ENCODE measurements at regions of chr11 and their contacts with region 1.

Region 1: GRCh38 chr11:75328426-75329277 is 22.8 kb downstream of the ARRB1 start:
- DNase-seq: peak; percentile 77
- ATAC-seq: peak; percentile 76
- H3K4me3 Mint-ChIP-seq: no peak overlapping the region
- H3K27ac Mint-ChIP-seq: peak overlapping the region; percentile 52
- H3K4me1 Mint-ChIP-seq: peaks cover 67% of the 10 kb centered on the region
- H3K27me3 Mint-ChIP-seq: no peaks in the 10 kb centered on the region

Region 2: GRCh38 chr11:75340050-75340409 is 11.4 kb after region 1 on chr11:
- CTCF ChIA-PET with region 1: interaction called, 22 read pairs
- POLR2A ChIA-PET with region 1: no interaction called
- intact Hi-C with region 1: no loop called
- DNase-seq: no peak
- ATAC-seq: peak; percentile 6
- H3K4me3 Mint-ChIP-seq: no peak overlapping the region
- H3K27ac Mint-ChIP-seq: peak overlapping the region; percentile 83
- H3K4me1 Mint-ChIP-seq: peaks cover 95% of the 10 kb centered on the region
- H3K27me3 Mint-ChIP-seq: no peaks in the 10 kb centered on the region

Region 3: DNA sequence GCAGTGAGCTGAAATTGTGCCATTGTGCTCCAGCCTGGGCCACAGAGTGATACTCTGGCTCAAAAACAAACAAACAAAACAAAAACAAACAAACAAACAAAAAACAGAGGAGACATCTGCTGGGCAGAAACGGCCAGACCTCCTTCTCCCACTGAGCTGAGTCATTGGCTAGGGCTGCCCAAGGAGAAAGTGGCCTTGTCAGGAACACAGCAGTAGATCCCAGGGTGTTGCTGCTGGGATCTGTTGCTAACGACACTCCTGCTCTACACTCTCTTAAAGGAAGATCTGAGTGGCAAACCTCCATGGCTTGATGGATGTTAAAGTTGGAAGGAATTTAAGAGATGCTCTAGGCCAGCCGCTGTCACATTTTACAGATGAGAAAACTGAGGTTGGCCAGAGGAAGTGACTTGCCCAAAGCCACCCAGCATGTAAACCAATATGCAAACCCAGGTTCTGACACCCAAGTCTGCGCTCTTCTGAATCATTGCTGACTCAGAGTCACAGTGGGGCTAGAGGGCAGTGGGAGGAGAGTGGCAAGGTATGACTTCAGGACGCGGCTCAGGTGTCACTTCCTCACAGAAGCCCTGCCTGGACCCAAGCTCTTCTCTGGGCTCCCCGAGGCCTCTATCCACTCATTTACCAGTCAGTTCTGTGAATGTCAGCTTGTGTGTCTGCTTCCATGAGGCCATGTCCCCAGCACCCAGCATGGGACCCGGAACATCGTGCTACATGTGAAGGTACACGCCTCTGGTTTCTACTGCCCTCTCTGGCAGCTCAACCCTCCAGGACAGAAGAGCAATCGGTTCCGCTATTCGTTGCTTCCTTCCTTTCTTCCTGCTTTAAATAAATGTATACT is 208.4 kb after region 1 on chr11:
- CTCF ChIA-PET with region 1: no interaction called
- POLR2A ChIA-PET with region 1: no interaction called
- intact Hi-C with region 1: no loop called
- DNase-seq: peak; percentile 80
- ATAC-seq: peak; percentile 93
- H3K4me3 Mint-ChIP-seq: no peak overlapping the region
- H3K27ac Mint-ChIP-seq: peak overlapping the region; percentile 44
- H3K4me1 Mint-ChIP-seq: peaks cover 38% of the 10 kb centered on the region
- H3K27me3 Mint-ChIP-seq: no peaks in the 10 kb centered on the region

Measured in activated CD4-positive, alpha-beta T cell treated with anti-CD3 and anti-CD28 coated beads for 36 hours (primary cell).